IMR-90 (cell line): ENCODE measurements at regions of chr9 and their contacts with region 1.

Region 1: DNA sequence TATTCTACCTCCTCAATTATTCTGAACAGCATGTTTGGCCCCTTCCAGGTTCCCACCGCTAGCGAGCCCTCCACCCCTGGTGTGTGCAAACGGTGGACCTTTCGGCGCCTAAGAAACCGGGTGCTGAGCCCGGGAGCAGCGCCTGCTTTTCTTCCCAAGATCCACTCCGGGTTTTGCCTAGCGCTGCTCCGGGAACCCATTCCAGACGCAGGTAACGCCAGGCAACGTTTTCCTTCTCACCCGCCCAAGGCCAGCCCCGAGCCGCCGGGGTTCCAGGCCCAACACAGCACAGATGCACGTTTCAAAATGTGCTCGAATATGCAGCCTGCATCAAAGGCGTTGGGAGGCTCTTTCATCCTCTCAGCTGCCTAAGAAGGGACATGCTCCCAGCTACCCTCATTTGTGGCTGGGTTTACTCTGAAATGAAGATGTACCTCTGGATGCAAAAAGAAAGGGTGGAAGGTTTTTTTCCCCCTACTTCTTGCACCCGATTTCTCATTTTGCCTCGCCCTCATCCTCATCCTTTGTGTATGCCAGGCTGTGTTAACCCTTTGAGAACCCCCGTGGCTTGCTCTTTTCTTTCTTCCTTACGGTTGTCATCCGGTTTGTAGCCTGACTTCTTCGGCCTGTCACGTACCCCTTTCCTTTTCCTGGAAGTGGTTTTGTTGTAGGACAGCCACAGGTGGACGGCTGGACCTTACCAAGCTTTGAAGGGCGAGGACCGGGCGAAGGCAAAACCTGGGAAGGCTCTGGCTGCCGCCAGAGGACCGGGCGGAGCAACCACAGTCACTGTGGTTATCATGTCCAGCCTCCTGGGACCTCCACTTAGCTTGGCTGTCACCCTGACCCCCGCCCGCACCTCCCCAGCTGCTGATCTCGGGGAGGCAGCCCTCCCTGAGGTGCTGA is 226.9 kb downstream of the SMARCA2 start:
- DNase-seq: peak; percentile 88
- ATAC-seq: peak; percentile 99
- H3K4me3 ChIP-seq: peak overlapping the region; percentile 44
- H3K27ac ChIP-seq: peak overlapping the region; percentile 55; the same call in 1 of the 2 replicates
- H3K4me1 ChIP-seq: peaks cover 5% of the 10 kb centered on the region; the same call in 1 of the 2 replicates
- H3K27me3 ChIP-seq: peaks cover 3% of the 10 kb centered on the region
- CTCF ChIP-seq: no peak
- POLR2A ChIP-seq: no peak
- RAD21 ChIP-seq: 0 out of 2 replicates have a peak, but pooled peaks have one; percentile 11

Region 2: DNA sequence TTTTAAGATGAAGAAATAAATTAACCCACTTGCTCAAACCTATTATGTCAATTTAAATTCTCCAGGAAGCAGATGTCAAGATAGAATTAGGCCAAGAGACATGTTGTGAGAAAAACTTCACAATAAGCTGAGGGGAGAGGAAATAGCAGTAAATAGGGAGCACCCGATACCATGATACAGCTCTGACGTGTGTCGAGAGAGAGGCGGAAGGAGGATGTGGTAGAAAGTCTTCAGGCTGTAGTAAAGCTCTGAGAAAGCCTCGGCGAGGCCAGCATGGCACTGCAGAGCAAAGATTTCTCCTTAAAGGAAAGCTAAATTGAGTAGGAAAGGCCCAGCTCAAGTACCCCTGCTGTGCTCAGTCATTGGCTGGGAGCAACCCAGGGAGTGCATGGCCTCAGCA is 607.9 kb after region 1 on chr9:
- CTCF ChIA-PET with region 1: no interaction called
- POLR2A ChIA-PET with region 1: no interaction called
- dilution Hi-C with region 1: no loop called
- in situ Hi-C with region 1: loop called (anchors 10 kb)
- intact Hi-C with region 1: no loop called
- DNase-seq: no peak
- ATAC-seq: no peak
- H3K4me3 ChIP-seq: no peak overlapping the region
- H3K27ac ChIP-seq: no peak overlapping the region
- H3K4me1 ChIP-seq: no peaks in the 10 kb centered on the region
- H3K27me3 ChIP-seq: peaks cover 14% of the 10 kb centered on the region
- CTCF ChIP-seq: no peak
- POLR2A ChIP-seq: no peak
- RAD21 ChIP-seq: no peak